Activated CD8-positive, alpha-beta memory T cell treated with anti-CD3 and anti-CD28 coated beads, Interleukin-2, amount 10 ng/mL, durations not matched to agents 7 days and 5 days (primary cell): ENCODE measurements at regions of chr15 and their contacts with region 1.

Region 1: DNA sequence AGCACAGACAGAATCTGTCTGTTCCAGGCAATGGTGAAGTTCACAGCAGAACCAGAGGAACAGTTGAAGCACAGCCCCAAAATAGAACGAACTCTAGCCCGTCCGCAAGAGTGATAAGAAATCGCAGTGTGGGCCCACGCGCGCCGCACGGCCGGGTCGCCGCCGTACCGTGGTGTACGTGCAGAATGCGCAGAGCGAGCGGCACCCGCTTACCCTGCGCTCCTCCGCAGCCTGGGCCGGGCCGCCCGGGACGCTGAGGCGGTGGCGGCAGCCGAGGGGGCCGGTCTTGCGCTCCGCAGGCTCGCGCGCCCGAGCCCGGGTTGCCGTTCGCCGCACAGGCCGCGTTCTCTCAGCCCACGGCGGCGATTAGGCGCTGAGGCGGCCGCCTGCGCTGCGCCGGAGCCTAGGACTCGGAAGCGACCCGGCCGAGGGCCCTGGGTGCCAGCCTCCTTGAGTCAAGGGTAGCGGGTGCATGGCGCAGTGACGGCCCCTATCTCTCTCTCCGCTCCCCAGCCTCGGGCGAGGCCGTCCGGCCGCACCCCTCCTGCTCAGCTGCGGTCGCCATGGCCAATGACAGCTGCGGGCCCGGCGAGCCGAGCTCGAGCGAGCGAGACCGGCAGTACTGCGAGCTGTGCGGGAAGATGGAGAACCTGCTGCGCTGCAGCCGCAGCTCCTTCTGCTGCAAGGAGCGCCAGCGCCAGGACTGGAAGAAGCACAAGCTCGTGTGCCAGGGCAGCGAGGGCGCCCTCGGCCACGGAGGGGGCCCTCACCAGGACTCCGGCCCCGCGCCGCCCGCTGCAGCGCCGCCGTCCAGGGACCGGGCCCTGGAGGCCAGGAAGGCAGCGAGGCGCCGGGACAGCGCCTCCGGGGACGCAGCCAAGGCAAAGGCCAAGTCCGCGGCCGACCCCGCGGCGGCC is 20.5 kb downstream of the WDR73 start:
- DNase-seq: peak; percentile 78
- ATAC-seq: peak; percentile 54
- H3K4me3 Mint-ChIP-seq: peak overlapping the region; percentile 93
- H3K27ac Mint-ChIP-seq: peak overlapping the region; percentile 97
- H3K4me1 Mint-ChIP-seq: peaks cover 50% of the 10 kb centered on the region
- H3K27me3 Mint-ChIP-seq: no peaks in the 10 kb centered on the region

Region 2: GRCh38 chr15:84570164-84570735 is 63.3 kb before region 1 on chr15:
- CTCF ChIA-PET with region 1: interaction called, 11 read pairs
- DNase-seq: peak; percentile 75
- ATAC-seq: peak; percentile 70
- H3K4me3 Mint-ChIP-seq: peak overlapping the region; percentile 79
- H3K27ac Mint-ChIP-seq: peak overlapping the region; percentile 85
- H3K4me1 Mint-ChIP-seq: peaks cover 20% of the 10 kb centered on the region
- H3K27me3 Mint-ChIP-seq: peaks cover 5% of the 10 kb centered on the region

Region 3: DNA sequence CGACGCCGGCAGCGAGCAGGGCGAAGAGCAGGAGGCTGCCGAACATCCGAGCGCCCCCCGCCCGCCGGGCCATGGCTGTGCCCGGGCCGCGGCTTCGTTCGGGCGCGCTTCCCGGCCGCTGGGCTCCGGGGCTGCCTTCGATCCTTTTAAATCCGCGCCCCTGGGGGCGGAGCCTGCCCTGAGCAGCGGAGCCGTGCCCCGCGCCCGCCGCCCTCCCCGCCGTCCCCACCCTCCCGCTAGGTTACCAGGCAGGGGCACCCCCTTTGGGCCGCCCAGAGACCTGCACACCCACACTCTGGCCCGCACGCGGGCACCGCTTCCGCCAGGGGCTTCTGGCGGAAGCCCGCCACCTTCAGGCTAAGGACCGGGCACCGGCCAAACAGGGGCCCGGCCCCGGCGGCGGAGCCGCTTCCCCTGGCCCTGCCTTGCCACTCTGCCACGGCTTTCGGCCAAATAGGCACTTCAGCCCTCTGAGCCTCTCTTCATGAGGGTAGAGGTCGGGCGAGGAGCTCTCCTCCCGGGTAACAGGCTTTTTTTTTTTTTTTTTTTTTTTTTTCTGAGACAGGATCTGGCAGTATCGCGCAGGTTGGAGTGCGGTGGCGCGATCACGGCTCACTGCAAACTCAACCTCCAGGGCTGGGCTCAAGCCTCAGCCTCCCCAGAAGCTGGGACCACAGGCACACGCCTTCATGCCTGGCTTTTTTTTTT is 24.7 kb after region 1 on chr15 and contains the start of gene NMB:
- CTCF ChIA-PET with region 1: interaction called, 23 read pairs
- DNase-seq: peak; percentile 86
- ATAC-seq: peak; percentile 68
- H3K4me3 Mint-ChIP-seq: peak within 1 kb of the TSS; percentile 65
- H3K27ac Mint-ChIP-seq: peak within 1 kb of the TSS; percentile 61
- H3K4me1 Mint-ChIP-seq: peaks cover 34% of the 10 kb centered on the region
- H3K27me3 Mint-ChIP-seq: no peaks in the 10 kb centered on the region
- total RNA-seq, gene NMB: 1.5 to 1.8 TPM

Region 4: GRCh38 chr15:85024509-85025214 is 391.1 kb after region 1 on chr15:
- CTCF ChIA-PET with region 1: no interaction called
- DNase-seq: no peak
- ATAC-seq: no peak
- H3K4me3 Mint-ChIP-seq: no peak overlapping the region
- H3K27ac Mint-ChIP-seq: no peak overlapping the region
- H3K4me1 Mint-ChIP-seq: peaks cover 44% of the 10 kb centered on the region
- H3K27me3 Mint-ChIP-seq: no peaks in the 10 kb centered on the region